Breast epithelium (tissue), 4 donors: ENCODE measurements at regions of chr9 and their contacts with region 1.

Region 1: GRCh38 chr9:2962471-2963172 is 118.7 kb upstream of the PUM3 start:
- DNase-seq: no peak
- H3K4me3 ChIP-seq: no peak overlapping the region
- H3K27ac ChIP-seq: no peak overlapping the region
- H3K4me1 ChIP-seq: no peaks in the 10 kb centered on the region
- H3K27me3 ChIP-seq: no peaks in the 10 kb centered on the region
- CTCF ChIP-seq: no peak
- POLR2A ChIP-seq: no peak

Region 2: DNA sequence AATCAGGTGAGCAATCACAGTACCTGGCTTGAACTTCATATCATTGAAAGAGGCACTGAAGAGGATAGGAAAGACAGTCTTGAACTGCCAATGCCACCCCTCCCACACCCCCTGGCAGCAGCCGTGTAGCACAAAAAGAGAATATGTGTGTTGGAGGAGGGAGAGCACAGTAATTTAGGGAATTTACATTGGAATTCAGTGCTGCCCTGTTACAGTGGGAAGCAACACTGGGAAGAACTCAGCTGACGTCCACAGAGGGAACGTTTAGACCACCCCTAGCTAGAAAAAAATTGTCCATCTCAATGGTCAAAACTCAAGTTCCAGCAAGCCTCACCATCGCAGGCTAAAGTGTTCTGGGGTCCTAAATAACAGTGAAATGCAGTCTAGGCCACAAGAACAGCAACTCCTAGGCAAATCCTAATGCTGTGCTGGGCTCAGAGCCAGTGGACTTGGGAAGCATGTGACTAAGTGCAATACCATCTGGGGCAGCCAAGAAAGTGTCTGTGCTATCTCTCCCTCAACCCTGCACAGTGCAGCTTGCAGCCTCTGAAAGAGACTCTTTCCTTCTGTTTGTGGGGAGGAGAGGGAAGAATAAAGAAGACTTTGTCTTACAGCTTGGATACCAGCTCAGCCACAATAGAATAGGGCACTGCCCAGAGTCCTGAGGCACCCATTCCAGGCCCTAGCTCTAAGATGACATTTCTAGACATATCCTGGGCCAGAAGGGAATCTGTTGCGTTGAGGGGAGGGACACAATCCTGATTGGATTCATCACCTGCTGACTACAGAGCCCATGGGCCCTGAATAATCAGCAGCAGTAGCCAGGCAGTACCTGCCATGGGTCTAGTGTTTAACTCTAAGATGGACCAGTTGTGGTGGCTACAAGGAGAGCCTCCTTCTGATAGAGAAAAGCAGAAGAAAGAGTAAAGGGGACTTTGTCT is 403.1 kb before region 1 on chr9:
- intact Hi-C with region 1: no loop called
- DNase-seq: peak in 1 of 2 donors; percentile 64
- H3K4me3 ChIP-seq: no peak overlapping the region
- H3K27ac ChIP-seq: peak overlapping the region; percentile 46 to 67
- H3K4me1 ChIP-seq: peaks cover 0 to 5% of the 10 kb centered on the region in 2 donors
- H3K27me3 ChIP-seq: no peaks in the 10 kb centered on the region
- CTCF ChIP-seq: no peak
- POLR2A ChIP-seq: no peak

Region 3: DNA sequence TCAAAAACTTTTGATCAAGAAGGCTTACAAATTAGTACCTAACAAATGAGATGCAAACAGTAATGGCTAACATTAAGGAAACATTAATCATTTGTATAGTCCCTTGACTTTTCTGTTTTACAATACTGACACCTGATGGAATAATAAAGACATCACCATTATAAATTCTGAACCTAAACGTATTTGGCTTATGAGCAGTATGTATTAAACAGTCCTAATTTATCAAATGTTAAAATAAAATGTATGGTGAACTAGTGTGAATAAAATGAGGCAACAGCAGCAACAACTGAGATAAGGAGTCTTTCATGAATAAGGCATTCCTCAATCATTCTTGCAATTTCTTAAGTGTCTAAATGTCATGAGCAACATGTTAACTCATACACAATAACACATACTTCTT is 124.7 kb before region 1 on chr9:
- intact Hi-C with region 1: no loop called
- DNase-seq: no peak
- H3K4me3 ChIP-seq: peak overlapping the region; percentile 14 to 49 (median 29)
- H3K27ac ChIP-seq: peak overlapping the region; percentile 62 to 65
- H3K4me1 ChIP-seq: peaks cover 0 to 32% of the 10 kb centered on the region in 2 donors
- H3K27me3 ChIP-seq: no peaks in the 10 kb centered on the region
- CTCF ChIP-seq: peak in 2 of 3 donors; percentile 27 to 42
- POLR2A ChIP-seq: no peak

Region 4: DNA sequence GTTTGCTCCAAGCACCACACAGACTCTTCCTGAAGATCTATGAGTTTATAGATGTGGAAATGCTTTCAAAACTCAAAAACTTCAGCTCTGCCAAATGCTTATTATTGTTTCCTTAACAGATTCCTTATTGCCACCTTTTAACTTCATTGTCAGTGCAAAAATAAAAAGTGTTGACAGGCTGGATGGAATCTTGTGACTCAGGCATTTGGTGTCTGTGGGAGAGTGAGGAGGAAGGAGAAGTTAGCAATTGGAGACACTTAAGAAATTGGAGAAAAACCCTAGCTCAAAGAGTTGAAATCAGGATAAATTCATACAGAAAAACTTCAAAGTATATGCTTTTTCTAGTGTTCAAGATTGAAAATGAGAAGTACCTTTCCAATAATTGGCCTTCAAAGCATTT is 21.9 kb after region 1 on chr9:
- intact Hi-C with region 1: loop called (anchors 2 kb)
- DNase-seq: no peak
- H3K4me3 ChIP-seq: no peak overlapping the region
- H3K27ac ChIP-seq: no peak overlapping the region
- H3K4me1 ChIP-seq: no peaks in the 10 kb centered on the region
- H3K27me3 ChIP-seq: no peaks in the 10 kb centered on the region
- CTCF ChIP-seq: no peak
- POLR2A ChIP-seq: no peak